ENCODE measurements at regions of chr20 and their contacts with region 1.

Region 1: GRCh38 chr20:4829514-4830215 is 108.0 kb downstream of the PRND start:
- DNase-seq: no peak
- H3K4me3 ChIP-seq: no peak overlapping the region
- H3K27ac ChIP-seq: no peak overlapping the region
- H3K4me1 ChIP-seq: no peaks in the 10 kb centered on the region
- H3K27me3 ChIP-seq: no peaks in the 10 kb centered on the region
- CTCF ChIP-seq: no peak

Region 2: DNA sequence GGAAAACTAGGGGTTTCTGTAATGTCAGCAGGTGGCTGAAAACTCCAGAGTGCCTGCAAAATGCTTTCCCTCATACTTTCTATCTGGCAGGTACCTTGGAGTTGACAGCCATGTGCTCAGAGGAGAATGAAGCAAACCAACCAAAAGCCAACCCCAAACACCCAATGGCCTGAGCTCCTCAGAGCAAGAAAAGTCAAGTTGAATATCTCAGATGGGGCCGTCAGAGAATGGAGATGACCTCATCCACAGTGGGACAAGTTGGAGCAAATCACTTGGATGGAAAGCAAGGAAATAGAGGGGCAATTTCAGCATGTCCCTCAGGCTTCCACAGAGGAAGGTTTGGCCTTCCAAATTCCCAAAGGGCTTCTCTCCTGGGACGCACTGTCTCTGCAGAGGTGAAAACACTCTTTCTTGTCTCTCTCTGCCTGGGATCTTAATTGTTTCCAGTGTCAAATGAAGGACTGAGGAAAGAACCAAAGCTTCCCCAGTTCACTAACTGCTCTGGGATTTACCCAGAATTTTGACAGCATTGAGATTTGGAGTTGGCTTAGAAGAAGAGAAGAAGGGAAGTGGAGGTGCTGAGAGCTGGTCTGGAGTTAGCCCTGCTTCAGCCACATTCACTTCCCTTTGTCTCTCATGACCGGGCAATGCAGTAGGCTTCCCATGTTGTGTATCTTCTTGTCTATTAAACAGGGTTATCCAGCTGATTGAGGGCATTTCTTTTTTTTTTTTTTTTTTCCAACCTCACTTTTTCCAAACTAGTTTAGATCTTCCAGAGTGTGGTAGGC is 65.7 kb before region 1 on chr20:
- CTCF ChIA-PET with region 1: interaction called, 10 read pairs
- POLR2A ChIA-PET with region 1: no interaction called
- intact Hi-C with region 1: no loop called
- DNase-seq: no peak
- H3K4me3 ChIP-seq: no peak overlapping the region
- H3K27ac ChIP-seq: no peak overlapping the region
- H3K4me1 ChIP-seq: peaks cover 15% of the 10 kb centered on the region
- H3K27me3 ChIP-seq: no peaks in the 10 kb centered on the region
- CTCF ChIP-seq: no peak